ENCODE measurements at regions of chr15 and their contacts with region 1.

Region 1: DNA sequence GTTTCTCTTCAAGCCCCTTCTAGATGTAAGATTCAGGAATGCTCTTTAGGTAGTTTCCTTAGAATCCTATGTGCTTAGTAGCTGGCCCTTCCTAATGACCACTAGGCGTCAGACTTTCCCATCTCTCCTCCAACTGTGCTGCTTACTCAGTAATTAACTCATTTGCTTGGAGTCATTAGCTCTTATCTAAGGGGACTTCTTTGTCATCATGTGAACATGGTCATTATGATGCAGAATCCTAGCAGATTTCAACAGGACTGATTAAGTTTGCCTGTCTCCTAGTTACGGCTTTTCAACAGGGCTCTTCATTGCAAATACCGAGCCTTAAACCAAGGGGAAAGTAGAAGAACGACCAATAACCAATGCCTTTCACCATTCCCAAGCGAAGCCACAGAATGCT is 46.4 kb downstream of the GJD2 start:
- DNase-seq: no peak
- ATAC-seq: peak in 1 of 2 donors; percentile 54
- H3K4me3 ChIP-seq: no peak overlapping the region
- H3K27ac ChIP-seq: no peak overlapping the region
- H3K4me1 ChIP-seq: no peaks in the 10 kb centered on the region
- H3K27me3 ChIP-seq: no peaks in the 10 kb centered on the region
- CTCF ChIP-seq: peak; percentile 29 to 70 (median 62)
- POLR2A ChIP-seq: no peak

Region 2: DNA sequence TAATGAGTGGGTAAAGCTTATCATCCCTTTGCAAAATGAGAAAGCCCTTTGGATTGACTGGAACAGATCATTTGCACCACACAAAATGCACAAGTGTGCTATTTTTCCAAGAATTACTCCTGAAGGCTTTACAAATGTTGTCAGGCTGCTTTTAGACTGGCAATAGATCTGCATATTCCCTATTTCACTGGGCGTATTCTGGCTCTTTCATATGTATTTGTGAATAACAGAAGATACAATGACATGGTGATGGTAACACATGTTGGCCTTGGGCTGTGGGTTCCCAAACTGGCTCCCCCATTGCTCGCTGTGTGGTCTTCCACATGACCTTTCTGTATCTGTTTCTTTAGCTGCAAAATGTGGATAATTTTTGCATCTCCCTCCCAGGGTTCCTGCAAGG is 1043.5 kb before region 1 on chr15:
- in situ Hi-C with region 1: no loop called
- intact Hi-C with region 1: loop called (anchors 5 kb)
- DNase-seq: no peak
- ATAC-seq: no peak
- H3K4me3 ChIP-seq: no peak overlapping the region
- H3K27ac ChIP-seq: no peak overlapping the region
- H3K4me1 ChIP-seq: no peaks in the 10 kb centered on the region
- H3K27me3 ChIP-seq: no peaks in the 10 kb centered on the region
- CTCF ChIP-seq: no peak
- POLR2A ChIP-seq: no peak

Region 3: GRCh38 chr15:34914317-34914716 is 205.9 kb after region 1 on chr15:
- in situ Hi-C with region 1: loop called in 2 of 4 experiments (anchors 10 kb)
- intact Hi-C with region 1: loop called (anchors 2 kb)
- DNase-seq: no peak
- ATAC-seq: no peak
- H3K4me3 ChIP-seq: no peak overlapping the region
- H3K27ac ChIP-seq: no peak overlapping the region
- H3K4me1 ChIP-seq: no peaks in the 10 kb centered on the region
- H3K27me3 ChIP-seq: no peaks in the 10 kb centered on the region
- CTCF ChIP-seq: no peak
- POLR2A ChIP-seq: no peak